Breast epithelium (tissue), 4 donors: ENCODE measurements at regions of chr10 and their contacts with region 1.

Region 1: DNA sequence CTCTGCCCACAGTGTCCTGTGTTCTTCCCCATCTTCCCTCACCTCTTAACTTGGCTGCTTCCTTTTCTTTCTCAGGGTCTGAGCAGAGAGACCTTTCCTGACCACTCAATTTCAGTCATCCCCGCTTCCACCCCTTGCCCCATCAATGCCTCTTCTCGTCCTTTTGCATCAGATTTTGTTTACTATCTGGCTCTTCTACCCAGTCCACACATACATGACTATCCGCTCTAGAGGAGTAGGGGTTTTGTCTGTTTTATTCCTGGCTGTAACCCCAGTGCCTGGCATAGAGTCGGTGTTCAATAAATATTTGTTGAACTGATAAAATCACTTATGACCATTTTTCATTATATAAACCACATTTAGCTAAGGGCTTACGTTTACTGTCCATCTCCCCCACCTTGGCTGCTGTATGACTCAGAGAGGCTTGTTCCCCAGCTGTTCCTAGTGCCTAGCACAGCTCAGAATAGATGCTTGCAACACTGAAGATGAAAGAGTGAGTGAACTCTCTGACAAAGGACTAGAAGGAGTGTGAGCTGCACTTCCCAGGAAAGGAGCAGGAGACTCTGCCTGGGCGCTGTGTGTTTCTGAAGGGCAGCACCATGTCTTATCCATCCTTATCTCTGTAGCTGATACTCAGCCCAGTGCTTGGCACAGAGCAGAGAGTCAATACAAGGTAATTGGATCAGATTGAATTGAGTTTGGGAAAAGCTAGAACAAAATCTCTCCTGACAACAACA is 21.9 kb downstream of the ARID5B start:
- DNase-seq: no peak
- H3K4me3 ChIP-seq: no peak overlapping the region
- H3K27ac ChIP-seq: peak overlapping the region; percentile 23 to 44
- H3K4me1 ChIP-seq: no peaks in the 10 kb centered on the region
- H3K27me3 ChIP-seq: no peaks in the 10 kb centered on the region
- CTCF ChIP-seq: no peak
- POLR2A ChIP-seq: no peak

Region 2: DNA sequence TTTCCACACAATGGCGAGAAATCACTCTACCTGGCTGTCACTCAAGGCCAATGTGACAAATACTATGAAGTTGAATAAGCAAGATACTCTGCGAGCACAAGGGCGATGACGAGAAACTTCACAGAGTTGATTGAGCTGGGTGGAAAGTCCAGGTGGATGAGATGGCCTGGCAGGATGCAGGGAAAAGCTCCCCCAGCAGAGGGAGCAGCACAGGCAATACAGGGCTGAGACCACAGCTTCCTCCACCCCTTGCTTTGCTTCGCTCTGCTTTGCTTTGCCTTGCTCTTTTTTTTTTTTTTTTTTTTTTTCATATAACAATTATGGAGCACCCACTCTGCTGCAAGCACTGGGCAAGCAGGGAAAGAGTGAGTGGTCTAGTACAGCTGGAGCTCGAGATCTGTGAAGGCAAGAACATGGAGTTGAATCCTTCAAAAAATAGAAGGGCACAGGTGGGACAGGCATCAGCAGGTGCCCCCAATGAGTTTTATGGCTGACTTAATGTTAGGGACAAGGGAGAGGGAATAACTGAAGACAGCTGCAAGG is 172.4 kb before region 1 on chr10:
- intact Hi-C with region 1: no loop called
- DNase-seq: peak; percentile 32 to 57
- H3K4me3 ChIP-seq: no peak overlapping the region
- H3K27ac ChIP-seq: no peak overlapping the region
- H3K4me1 ChIP-seq: peaks cover 0 to 9% of the 10 kb centered on the region in 2 donors
- H3K27me3 ChIP-seq: no peaks in the 10 kb centered on the region
- CTCF ChIP-seq: peak; percentile 12 to 63 (median 50)
- POLR2A ChIP-seq: no peak

Region 3: GRCh38 chr10:62005281-62005680 is 81.9 kb after region 1 on chr10:
- intact Hi-C with region 1: loop called (anchors 5 kb)
- DNase-seq: no peak
- H3K4me3 ChIP-seq: no peak overlapping the region
- H3K27ac ChIP-seq: peak overlapping the region; percentile 54 to 55
- H3K4me1 ChIP-seq: peaks cover 0 to 6% of the 10 kb centered on the region in 2 donors
- H3K27me3 ChIP-seq: no peaks in the 10 kb centered on the region
- CTCF ChIP-seq: no peak
- POLR2A ChIP-seq: no peak